Esophagus muscularis mucosa (tissue), 4 donors: ENCODE measurements at regions of chr10 and their contacts with region 1.

Region 1: GRCh38 chr10:10911471-10911921 is 106.2 kb upstream of the CELF2 start:
- DNase-seq: peak; percentile 94
- H3K4me3 ChIP-seq: peak overlapping the region; percentile 34 to 54 (median 41)
- H3K27ac ChIP-seq: peak overlapping the region; percentile 69 to 86 (median 82)
- H3K4me1 ChIP-seq: peaks cover 15 to 56% (median 44%) of the 10 kb centered on the region in 4 donors
- H3K27me3 ChIP-seq: no peaks in the 10 kb centered on the region
- CTCF ChIP-seq: peak in 1 of 3 experiments; percentile 9
- EP300 ChIP-seq: no peak
- POLR2A ChIP-seq: no peak

Region 2: DNA sequence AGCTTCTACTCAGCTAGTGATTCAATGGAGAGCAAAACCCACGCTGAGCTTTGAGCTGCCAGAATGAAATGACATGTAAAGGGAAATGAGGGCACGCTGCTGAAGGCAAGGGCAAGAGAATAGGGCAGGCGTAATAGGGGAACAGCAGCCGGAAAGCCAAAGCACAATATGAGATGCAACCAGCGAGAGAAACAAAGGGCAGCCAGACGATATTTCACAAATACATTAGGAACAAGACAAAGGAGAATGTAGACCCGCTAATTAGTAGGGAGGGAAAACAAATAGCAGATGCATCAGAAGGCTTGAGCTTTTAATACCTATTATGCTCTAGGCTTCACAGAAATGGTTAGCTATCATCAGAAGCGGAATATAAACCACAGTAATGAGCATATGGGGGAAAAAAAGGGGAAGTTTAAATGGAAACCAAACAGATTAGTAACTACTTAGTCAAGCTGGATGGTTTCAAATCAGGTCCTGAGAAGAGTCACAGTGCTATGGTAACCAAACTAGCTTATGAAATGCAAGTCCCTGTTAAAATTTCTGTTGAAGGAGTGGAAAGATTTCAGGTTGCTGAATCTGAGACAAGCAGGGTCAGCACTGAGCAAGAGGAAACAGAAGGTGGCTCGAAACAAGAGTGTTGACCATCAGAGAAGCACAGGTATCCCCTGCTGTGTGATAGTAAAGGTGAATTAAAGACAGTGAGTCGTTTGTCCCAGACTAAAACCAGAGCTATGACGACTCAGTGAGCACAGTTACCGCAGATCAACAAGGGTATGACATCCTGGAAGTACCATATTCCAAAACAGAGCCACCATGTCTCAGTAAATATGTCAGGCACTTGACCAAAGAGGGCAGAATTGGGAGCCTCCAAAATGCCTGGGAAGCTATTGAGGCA is 390.8 kb before region 1 on chr10:
- intact Hi-C with region 1: no loop called
- DNase-seq: peak; percentile 84
- H3K4me3 ChIP-seq: no peak overlapping the region
- H3K27ac ChIP-seq: no peak overlapping the region
- H3K4me1 ChIP-seq: no peaks in the 10 kb centered on the region
- H3K27me3 ChIP-seq: no peaks in the 10 kb centered on the region
- CTCF ChIP-seq: no peak
- EP300 ChIP-seq: no peak
- POLR2A ChIP-seq: no peak

Region 3: DNA sequence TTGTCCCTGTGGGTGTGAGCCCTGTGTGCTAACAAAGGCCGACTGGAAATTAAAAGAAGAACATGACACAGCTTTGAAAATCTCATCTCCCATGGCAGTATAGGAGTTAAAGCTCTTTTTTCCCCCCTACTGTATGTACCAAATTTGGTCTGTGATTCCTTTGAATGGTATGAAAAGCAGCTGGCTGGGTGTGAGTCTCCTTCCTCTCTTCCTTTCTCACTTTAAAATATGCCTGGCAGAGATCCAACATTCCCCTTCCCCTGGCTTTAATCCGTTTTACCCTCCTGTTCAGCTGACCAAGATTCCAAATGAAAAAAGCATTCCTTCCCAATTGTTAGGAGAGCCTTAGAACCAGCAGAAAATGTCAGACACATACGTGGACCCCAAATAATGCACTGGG is 118.8 kb before region 1 on chr10:
- intact Hi-C with region 1: loop called (anchors 5 kb)
- DNase-seq: no peak
- H3K4me3 ChIP-seq: no peak overlapping the region
- H3K27ac ChIP-seq: no peak overlapping the region
- H3K4me1 ChIP-seq: peaks cover 12 to 53% (median 38%) of the 10 kb centered on the region in 4 donors
- H3K27me3 ChIP-seq: no peaks in the 10 kb centered on the region
- CTCF ChIP-seq: no peak
- EP300 ChIP-seq: no peak
- POLR2A ChIP-seq: no peak

Region 4: GRCh38 chr10:10878963-10879362 is 32.5 kb before region 1 on chr10:
- intact Hi-C with region 1: loop called (anchors 5 kb)
- DNase-seq: peak; percentile 34
- H3K4me3 ChIP-seq: no peak overlapping the region
- H3K27ac ChIP-seq: peak overlapping the region; percentile 20 to 59 (median 37)
- H3K4me1 ChIP-seq: peaks cover 0 to 17% (median 15%) of the 10 kb centered on the region in 4 donors
- H3K27me3 ChIP-seq: no peaks in the 10 kb centered on the region
- CTCF ChIP-seq: no peak
- EP300 ChIP-seq: no peak
- POLR2A ChIP-seq: no peak

Region 5: GRCh38 chr10:10996966-10997620 is 85.6 kb after region 1 on chr10:
- intact Hi-C with region 1: no loop called
- DNase-seq: peak; percentile 42
- H3K4me3 ChIP-seq: no peak overlapping the region
- H3K27ac ChIP-seq: no peak overlapping the region
- H3K4me1 ChIP-seq: peaks cover 0 to 14% (median 9%) of the 10 kb centered on the region in 4 donors
- H3K27me3 ChIP-seq: no peaks in the 10 kb centered on the region
- CTCF ChIP-seq: no peak
- EP300 ChIP-seq: no peak
- POLR2A ChIP-seq: no peak

Region 6: DNA sequence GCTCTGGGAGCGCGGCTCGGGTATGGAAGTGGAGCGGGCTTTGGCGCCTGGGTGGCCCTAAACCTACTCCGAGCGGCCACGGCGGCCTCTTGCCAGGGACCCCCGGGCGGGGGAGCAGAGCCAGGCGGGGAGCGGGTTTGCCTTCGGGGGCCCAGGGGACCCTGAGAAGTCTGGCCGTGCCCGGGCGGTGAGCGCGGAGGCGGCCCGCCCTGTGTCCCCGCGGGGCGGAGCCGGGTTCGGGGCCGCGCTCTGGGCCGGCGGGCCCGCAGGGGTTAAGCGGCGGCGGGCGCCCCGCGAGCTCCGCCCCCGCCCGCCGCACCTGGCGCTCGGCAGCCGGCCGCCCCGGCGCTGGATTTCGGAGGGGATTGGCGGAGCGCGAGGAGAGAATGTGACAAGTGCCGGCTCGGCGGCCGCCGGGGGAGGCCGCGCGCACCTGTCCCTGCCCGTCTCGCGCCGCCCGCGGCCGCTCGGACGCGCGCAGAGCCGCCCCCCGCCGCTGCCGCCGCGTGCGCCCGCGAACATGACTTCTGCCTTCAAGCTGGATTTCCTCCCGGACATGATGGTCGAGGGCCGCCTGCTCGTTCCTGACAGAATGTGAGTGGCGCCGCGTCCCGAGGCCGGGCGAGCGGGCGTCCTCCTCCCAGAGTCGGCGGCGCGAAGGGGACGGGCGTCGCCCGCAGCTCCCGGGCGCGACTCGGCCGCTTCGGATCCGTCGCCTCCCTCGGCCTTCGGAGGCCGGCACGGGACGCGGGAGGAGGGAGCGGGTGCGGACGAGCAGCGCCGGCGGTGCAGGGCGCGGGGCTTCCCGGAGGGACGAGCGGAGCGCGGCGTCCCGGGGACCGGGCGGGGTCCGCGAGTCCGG is 106.3 kb after region 1 on chr10 and contains the start of gene CELF2:
- intact Hi-C with region 1: loop called (anchors 10 kb)
- DNase-seq: no peak
- H3K4me3 ChIP-seq: peak within 1 kb of the TSS; percentile 84 to 95 (median 92)
- H3K27ac ChIP-seq: peak within 1 kb of the TSS; percentile 86 to 93 (median 90)
- H3K4me1 ChIP-seq: peaks cover 24 to 58% (median 47%) of the 10 kb centered on the region in 4 donors
- H3K27me3 ChIP-seq: no peaks in the 10 kb centered on the region
- CTCF ChIP-seq: no peak
- EP300 ChIP-seq: no peak
- POLR2A ChIP-seq: peak; percentile 19
- total RNA-seq, gene CELF2: 81.8 to 128 (median 104) TPM